ENCODE measurements at regions of chr14 and their contacts with region 1.

Region 1: DNA sequence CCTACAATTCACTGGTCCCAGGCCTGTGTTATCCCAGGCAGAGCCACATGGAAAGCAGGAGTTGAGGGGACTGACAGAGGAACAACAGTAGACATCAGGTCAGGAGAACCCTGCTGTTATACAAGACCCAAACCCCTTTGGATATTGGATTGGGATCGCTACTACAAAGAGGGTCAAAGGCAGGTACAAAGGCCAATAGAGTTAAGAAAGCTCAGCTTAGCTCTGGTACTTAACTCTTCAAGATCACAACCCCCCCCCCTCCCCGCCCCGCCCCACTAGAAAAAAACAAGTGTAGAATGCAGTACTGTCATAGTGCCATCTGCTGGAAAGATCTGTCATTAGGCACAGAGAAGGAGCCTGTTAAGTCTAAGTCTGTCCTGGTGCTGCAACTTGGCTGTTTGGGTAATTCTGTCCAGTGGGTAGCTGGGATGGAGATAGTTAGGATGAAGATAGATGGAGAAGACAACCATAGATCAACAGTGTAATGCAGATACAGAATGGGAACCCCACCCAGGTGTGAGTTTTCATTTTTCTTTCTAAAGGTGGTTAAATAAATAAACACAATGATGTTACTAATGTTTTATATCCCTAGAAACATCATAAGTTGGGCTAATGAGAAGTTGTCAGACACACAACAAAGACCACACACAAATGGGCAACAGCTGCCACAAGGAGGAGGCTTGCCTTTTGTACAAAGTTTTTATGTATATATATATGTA is 17.2 kb downstream of the REM2 start:
- DNase-seq: no peak
- H3K4me3 ChIP-seq: no peak overlapping the region
- H3K27me3 ChIP-seq: no peaks in the 10 kb centered on the region
- CTCF ChIP-seq: peak; percentile 73

Region 2: DNA sequence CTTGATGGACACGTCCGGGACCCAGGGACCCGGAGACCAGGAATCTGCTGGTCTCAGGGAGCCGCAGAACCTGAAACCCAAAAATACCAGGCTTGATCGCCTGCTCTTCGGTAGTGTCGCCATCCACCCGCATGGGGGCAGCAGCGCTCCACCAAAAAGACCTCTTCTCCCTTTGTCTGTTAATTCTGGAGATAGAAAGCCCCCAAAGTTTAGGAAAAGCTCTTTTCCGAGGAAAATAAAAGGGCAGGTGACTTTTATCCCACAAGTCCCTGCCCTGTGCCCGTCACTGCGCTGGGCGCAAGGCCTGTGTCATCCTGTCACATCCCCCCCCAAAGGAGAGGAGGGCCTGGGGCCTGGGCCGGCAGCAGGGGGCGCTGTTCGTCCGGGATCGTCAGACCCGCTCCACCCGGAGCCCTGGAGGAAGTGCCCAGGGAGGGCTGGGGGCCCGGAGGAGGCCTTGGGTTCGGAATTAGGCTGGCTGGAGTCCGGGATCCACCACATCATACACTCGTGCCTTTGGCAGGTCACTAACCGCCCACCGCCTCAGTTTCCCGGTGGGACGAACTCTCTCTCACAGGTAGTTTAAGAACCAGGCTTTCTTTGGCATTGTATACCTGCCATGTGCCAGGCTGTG is 343.1 kb before region 1 on chr14:
- CTCF ChIA-PET with region 1: interaction called, 23 read pairs
- POLR2A ChIA-PET with region 1: no interaction called
- DNase-seq: no peak
- H3K4me3 ChIP-seq: peak overlapping the region; percentile 22
- H3K27me3 ChIP-seq: no peaks in the 10 kb centered on the region
- CTCF ChIP-seq: peak; percentile 96

Region 3: GRCh38 chr14:22836301-22837113 is 63.7 kb before region 1 on chr14 and contains the start of gene MMP14:
- CTCF ChIA-PET with region 1: interaction called, 13 read pairs
- POLR2A ChIA-PET with region 1: no interaction called
- DNase-seq: peak; percentile 81
- H3K4me3 ChIP-seq: peak within 1 kb of the TSS; percentile 83
- H3K27me3 ChIP-seq: no peaks in the 10 kb centered on the region
- CTCF ChIP-seq: peak; percentile 69
- polyA plus RNA-seq, gene MMP14: 327 and 592 TPM in 2 replicates

Region 4: DNA sequence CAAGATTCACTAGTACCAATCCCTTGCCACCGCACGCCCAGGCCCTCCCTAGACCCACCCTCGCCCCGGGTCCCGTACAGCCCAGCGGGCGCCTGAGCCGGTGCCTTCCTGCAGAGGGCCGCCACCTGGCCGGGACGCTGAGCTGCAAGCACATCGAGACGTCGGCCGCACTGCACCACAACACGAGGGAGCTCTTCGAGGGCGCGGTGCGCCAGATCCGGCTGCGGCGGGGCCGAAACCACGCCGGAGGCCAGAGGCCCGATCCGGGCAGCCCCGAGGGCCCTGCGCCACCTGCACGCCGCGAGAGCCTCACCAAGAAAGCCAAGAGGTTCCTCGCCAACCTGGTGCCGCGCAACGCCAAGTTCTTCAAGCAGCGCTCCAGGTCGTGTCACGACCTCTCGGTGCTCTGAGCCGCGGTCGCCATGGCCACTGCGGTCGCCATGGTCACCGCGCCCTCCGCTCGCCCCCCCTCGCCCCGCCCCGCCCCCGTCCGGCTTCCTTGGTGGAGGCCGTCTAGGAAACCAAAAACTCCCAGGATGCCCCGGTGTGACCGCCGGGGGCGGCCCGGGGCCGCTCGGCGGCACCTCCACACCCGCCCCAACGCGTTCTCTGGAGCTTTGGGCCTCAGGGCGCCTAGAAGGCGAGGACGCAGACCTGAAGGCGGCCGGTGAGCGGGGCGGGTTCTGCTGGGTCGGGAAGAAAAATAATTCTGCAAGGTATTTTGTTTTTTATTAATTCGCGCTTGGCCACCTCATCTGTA is 13.6 kb before region 1 on chr14:
- CTCF ChIA-PET with region 1: interaction called, 34 read pairs
- POLR2A ChIA-PET with region 1: no interaction called
- DNase-seq: no peak
- H3K4me3 ChIP-seq: peak overlapping the region; percentile 53
- H3K27me3 ChIP-seq: no peaks in the 10 kb centered on the region
- CTCF ChIP-seq: 0 out of 2 replicates have a peak, but pooled peaks have one; percentile 18

Region 5: DNA sequence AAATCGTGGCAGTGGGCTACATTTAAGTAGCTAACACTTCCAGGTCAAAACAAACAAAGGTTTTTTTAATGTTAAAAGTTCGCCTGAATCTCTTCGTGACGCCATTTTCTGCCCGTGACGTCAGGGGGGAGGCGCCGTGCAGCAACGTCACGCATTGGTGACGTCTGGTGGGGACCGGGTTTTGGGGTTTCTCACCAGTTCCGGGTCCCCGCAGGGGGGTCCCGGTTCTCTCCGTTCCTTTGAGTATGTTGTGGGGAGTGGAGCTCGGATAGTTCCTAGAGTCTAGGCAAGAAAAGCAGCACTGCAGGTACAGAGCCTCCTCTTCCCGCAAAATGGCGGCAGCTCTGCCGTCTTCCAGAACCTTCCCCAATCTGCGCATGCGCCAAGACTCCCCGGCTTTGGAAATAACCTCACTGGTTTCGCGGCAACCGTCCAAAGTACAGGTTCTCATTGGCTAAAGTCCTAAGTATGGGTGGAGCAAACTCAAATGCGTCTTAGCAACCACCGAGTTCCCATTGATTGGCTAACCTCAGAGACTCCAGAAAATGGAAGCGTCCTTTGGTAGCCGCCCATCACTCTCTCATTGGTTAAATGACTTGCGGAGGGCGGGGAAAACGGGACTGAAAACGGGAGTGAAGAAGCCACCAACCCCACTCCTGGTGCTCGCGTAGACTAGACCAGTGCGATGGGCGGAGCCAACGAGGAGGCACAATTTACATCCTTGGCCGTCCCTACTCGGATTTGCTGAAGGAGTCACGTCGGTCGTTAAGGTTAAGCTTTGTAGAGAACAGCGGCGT is 18.8 kb after region 1 on chr14 and contains the start of gene RBM23:
- CTCF ChIA-PET with region 1: interaction called, 14 read pairs
- POLR2A ChIA-PET with region 1: interaction called, 5 read pairs
- DNase-seq: peak; percentile 100
- H3K4me3 ChIP-seq: peak within 1 kb of the TSS; percentile 74
- H3K27me3 ChIP-seq: no peaks in the 10 kb centered on the region
- CTCF ChIP-seq: no peak
- polyA plus RNA-seq, gene RBM23: 54.1 and 60.9 TPM in 2 replicates

Region 6: GRCh38 chr14:22945642-22946041 is 45.4 kb after region 1 on chr14:
- CTCF ChIA-PET with region 1: no interaction called
- POLR2A ChIA-PET with region 1: no interaction called
- DNase-seq: no peak
- H3K4me3 ChIP-seq: no peak overlapping the region
- H3K27me3 ChIP-seq: no peaks in the 10 kb centered on the region
- CTCF ChIP-seq: no peak

Measured in BJ (cell line).